ENCODE measurements at regions of chr22 and their contacts with region 1.

Region 1: GRCh38 chr22:39212721-39213376 is 31.9 kb downstream of the PDGFB start:
- DNase-seq: peak; percentile 93 to 99
- H3K4me3 ChIP-seq: peak overlapping the region; percentile 41; the same call in 1 of the 2 replicates
- H3K27ac ChIP-seq: peak overlapping the region; percentile 87
- H3K4me1 ChIP-seq: peaks cover 55% of the 10 kb centered on the region
- H3K27me3 ChIP-seq: no peaks in the 10 kb centered on the region
- CTCF ChIP-seq: peak; percentile 61; the same call in 1 of the 2 replicates

Region 2: GRCh38 chr22:39170825-39171622 is 41.8 kb before region 1 on chr22:
- CTCF ChIA-PET with region 1: interaction called, 4 read pairs
- POLR2A ChIA-PET with region 1: interaction called, 6 read pairs
- intact Hi-C with region 1: loop called (anchors 1 kb)
- DNase-seq: peak; percentile 53 to 91
- H3K4me3 ChIP-seq: no peak overlapping the region
- H3K27ac ChIP-seq: no peak overlapping the region
- H3K4me1 ChIP-seq: peaks cover 50% of the 10 kb centered on the region
- H3K27me3 ChIP-seq: no peaks in the 10 kb centered on the region
- CTCF ChIP-seq: peak; percentile 100

Region 3: DNA sequence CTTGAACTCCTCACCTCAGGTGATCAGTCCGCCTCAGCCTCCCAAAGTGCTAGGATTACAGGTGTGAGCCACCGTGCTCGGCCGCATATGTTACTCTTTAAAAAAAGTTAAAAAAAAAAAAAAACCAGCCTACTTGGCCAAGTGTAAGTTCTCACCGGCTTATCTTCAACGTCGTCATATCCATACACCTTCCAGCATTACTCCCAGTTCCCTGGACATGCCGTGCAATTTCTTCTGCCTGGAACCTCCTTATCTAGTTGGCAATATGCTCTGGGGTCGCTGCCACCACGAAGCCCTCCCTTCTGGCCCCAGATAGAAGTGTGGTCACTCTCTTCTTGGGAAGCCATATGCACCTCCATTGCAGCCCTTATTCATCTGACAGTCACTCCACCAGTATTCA is 24.0 kb before region 1 on chr22:
- CTCF ChIA-PET with region 1: interaction called, 4 read pairs
- POLR2A ChIA-PET with region 1: interaction called, 23 read pairs
- intact Hi-C with region 1: no loop called
- DNase-seq: no peak
- H3K4me3 ChIP-seq: no peak overlapping the region
- H3K27ac ChIP-seq: no peak overlapping the region
- H3K4me1 ChIP-seq: no peaks in the 10 kb centered on the region
- H3K27me3 ChIP-seq: no peaks in the 10 kb centered on the region
- CTCF ChIP-seq: no peak

Region 4: DNA sequence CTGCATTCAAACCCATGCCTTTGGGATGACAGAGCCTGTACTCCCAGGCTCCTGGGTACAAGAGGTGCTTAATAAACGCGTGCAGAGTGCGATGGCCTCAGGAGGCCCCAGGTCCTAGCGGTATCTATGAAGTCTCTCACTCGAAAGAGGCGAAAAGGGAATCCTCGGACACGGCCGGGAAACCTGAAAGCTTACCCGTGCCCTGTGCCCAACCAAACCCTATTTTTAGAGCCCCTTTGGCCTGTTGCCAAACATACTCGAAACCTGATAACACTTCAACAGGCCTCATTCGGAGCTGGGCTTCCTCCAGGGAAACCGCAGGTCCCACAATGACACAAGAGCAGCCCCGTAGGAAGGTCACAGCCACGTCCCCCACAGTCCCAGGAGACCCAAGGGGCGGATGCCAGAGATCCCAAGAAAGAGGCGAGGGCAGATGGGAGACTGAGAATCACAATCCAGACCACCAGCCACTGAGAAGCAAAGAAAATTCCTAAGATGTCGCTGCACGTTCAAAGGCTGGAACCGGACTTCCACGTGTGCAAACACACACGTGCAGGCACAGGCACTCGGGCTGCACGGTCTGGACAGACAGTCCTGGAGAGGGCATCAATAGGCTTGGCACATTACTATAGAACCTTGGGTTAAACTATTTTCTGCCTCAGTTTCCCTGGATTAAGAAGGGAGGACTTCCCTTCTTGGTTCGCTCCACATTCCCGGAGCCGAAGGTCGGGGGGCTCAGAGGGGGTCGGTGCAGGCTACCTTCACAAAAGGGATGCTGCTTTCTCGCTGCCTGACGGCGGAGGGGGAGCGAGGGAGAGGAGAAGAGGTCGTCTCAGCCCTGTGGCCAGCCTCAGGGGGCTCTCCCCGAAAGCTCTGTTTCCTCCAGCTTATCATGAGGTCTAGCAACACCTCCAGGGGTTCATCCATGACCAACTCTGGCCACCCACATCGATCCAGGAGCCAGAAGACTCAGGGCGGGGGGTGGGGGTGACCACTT is 23.8 kb after region 1 on chr22:
- CTCF ChIA-PET with region 1: interaction called, 3 read pairs
- POLR2A ChIA-PET with region 1: interaction called, 9 read pairs
- intact Hi-C with region 1: loop called (anchors 1 kb)
- DNase-seq: no peak
- H3K4me3 ChIP-seq: no peak overlapping the region
- H3K27ac ChIP-seq: no peak overlapping the region
- H3K4me1 ChIP-seq: peaks cover 49% of the 10 kb centered on the region
- H3K27me3 ChIP-seq: no peaks in the 10 kb centered on the region
- CTCF ChIP-seq: no peak

Region 5: GRCh38 chr22:39292561-39293098 is 79.8 kb after region 1 on chr22:
- CTCF ChIA-PET with region 1: interaction called, 4 read pairs
- POLR2A ChIA-PET with region 1: interaction called, 8 read pairs
- intact Hi-C with region 1: loop called (anchors 1 kb)
- DNase-seq: peak; percentile 96 to 97
- H3K4me3 ChIP-seq: no peak overlapping the region
- H3K27ac ChIP-seq: peak overlapping the region; percentile 84
- H3K4me1 ChIP-seq: peaks cover 76% of the 10 kb centered on the region
- H3K27me3 ChIP-seq: no peaks in the 10 kb centered on the region
- CTCF ChIP-seq: no peak

Region 6: GRCh38 chr22:39674536-39674935 is 461.7 kb after region 1 on chr22:
- CTCF ChIA-PET with region 1: no interaction called
- POLR2A ChIA-PET with region 1: no interaction called
- intact Hi-C with region 1: no loop called
- DNase-seq: peak; percentile 33 to 74
- H3K4me3 ChIP-seq: no peak overlapping the region
- H3K27ac ChIP-seq: no peak overlapping the region
- H3K4me1 ChIP-seq: peaks cover 22% of the 10 kb centered on the region
- H3K27me3 ChIP-seq: no peaks in the 10 kb centered on the region
- CTCF ChIP-seq: no peak